Activated T-helper 2 cell treated with anti-CD3 and anti-CD28 coated beads, Interferon-gamma antibody, Interleukin-2, Interleukin-4, amounts not matched to agents 10 μg/mL and 5 μg/mL and 100 μg/mL, durations not matched to agents 14 hours and 24 hours and 36 hours (primary cell): ENCODE measurements at regions of chr13 and their contacts with region 1.

Region 1: GRCh38 chr13:46341112-46341711 is 45.8 kb downstream of the RUBCNL start:
- DNase-seq: no peak
- H3K4me3 Mint-ChIP-seq: peak overlapping the region; percentile 5
- H3K27ac Mint-ChIP-seq: peak overlapping the region; percentile 81
- H3K4me1 Mint-ChIP-seq: peaks cover 45% of the 10 kb centered on the region
- H3K27me3 Mint-ChIP-seq: no peaks in the 10 kb centered on the region

Region 2: DNA sequence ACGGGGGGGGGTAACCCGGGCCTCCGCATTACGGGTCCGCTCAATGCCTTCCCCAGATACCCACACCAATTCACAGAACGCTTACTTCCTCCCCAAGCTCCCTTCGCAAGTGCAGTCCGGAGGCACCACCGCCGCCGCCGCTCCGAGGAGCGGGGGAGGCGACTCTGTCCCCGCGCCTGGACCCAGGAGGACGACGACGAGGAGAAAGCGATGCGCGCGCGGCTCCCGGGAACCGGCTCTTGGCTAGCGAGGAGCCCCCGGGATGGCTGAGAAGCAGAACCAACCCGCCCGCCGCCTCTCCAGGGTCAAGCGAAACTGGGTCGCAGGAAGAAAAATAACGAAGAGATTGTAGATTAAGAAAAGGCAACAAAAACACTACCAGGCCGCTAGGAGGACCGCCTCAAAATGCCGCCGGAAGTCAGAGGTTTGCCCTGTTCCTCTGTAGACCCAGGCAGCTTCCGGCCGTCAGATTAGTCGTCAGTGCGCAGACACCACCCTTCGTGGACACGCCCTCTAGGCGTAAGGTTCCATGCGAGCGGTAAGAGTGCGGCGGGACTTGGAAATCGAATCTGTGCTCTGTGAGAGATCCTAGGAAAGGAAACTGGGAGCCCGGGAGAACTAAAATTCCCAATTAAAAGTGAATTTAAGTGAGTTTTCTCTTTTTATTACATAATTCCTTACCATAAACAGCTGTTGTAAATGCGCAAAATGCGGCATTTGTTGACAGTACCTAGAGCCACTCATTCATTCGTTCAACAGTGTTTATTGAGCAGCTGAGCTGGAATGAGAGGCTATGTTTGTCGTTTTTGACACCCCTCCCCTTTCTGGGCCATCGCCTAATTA is 288.7 kb before region 1 on chr13 and contains the start of gene ZC3H13:
- intact Hi-C with region 1: loop called (anchors 10 kb)
- DNase-seq: peak; percentile 91
- H3K4me3 Mint-ChIP-seq: peak within 1 kb of the TSS; percentile 95
- H3K27ac Mint-ChIP-seq: peak within 1 kb of the TSS; percentile 98
- H3K4me1 Mint-ChIP-seq: peaks cover 24% of the 10 kb centered on the region
- H3K27me3 Mint-ChIP-seq: peaks cover 14% of the 10 kb centered on the region
- total RNA-seq, gene ZC3H13: 55.2 and 56.6 TPM in 2 replicates

Region 3: GRCh38 chr13:46295491-46296114 is 45.6 kb before region 1 on chr13:
- intact Hi-C with region 1: loop called (anchors 5 kb)
- DNase-seq: peak; percentile 49
- H3K4me3 Mint-ChIP-seq: peak overlapping the region; percentile 34
- H3K27ac Mint-ChIP-seq: peak overlapping the region; percentile 86
- H3K4me1 Mint-ChIP-seq: peaks cover 45% of the 10 kb centered on the region
- H3K27me3 Mint-ChIP-seq: no peaks in the 10 kb centered on the region

Region 4: GRCh38 chr13:46354156-46355091 is 13.2 kb after region 1 on chr13:
- intact Hi-C with region 1: loop called (anchors 1 kb)
- DNase-seq: peak; percentile 31
- H3K4me3 Mint-ChIP-seq: no peak overlapping the region
- H3K27ac Mint-ChIP-seq: peak overlapping the region; percentile 82
- H3K4me1 Mint-ChIP-seq: peaks cover 14% of the 10 kb centered on the region
- H3K27me3 Mint-ChIP-seq: no peaks in the 10 kb centered on the region

Region 5: GRCh38 chr13:46392967-46393366 is 51.8 kb after region 1 on chr13:
- intact Hi-C with region 1: loop called (anchors 2 kb)
- DNase-seq: no peak
- H3K4me3 Mint-ChIP-seq: no peak overlapping the region
- H3K27ac Mint-ChIP-seq: no peak overlapping the region
- H3K4me1 Mint-ChIP-seq: peaks cover 37% of the 10 kb centered on the region
- H3K27me3 Mint-ChIP-seq: peaks cover 3% of the 10 kb centered on the region

Region 6: DNA sequence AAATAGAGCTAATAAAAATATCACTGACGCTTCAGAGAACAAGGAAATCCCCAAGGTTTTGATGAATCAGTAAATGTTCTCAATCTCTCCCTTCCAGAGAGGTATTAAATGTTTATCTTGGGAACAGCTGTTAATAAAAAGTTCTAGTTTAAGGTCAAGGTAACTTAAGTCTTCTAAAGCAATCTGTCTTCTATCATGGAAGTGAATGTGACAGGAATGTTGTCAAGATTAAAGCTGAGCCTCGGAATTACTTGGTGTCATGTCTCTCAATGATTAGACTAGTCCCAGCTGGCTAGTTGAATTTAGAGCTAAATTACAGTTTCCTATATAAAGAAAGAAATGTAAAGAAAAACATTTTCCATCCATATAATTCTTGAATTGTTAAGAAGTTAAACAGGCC is 432.3 kb after region 1 on chr13:
- intact Hi-C with region 1: no loop called
- DNase-seq: no peak
- H3K4me3 Mint-ChIP-seq: no peak overlapping the region
- H3K27ac Mint-ChIP-seq: no peak overlapping the region
- H3K4me1 Mint-ChIP-seq: no peaks in the 10 kb centered on the region
- H3K27me3 Mint-ChIP-seq: no peaks in the 10 kb centered on the region